ENCODE measurements at regions of chr1 and their contacts with region 1.

Region 1: DNA sequence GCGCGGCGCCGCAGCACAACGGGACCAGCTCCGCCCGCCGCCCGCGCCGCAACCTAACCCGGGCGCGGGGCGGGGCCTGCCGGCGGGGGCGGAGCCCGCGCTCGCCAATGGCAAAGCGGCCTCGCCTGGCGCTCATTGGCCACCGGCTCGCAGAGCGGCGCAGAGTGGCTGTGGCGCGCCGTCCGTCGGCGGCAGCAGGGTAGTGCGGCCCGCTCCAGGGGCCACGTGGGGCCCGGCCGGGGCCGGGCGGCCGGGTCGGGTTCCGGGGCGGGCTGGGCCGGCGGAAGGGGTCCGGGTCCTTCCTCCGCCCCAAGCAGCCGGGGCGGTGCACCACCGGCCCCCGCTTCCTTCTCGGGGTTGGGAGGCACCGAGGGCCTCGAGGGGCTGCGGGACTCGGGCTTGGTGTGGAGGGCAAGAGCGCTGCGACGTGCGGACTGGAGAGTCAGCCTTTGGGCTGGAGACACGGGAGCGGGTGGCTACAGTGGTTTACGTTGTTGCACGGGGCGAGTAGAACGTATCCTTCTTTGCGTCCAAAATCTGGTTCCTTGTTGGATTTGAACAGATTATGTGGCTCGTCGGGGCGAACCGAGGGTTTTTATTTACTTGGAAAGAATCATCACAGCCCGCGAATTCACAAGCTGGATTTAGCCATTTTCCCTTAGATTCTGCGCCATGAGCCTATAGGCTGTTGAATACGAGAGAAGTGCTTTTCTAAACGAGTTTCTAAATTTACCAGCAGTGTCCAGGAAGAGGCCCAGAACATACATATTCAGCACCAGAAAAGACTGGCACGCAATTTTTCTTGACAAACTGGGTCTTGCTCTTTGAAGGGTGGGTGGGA is at the start of gene SRM:
- DNase-seq: peak; percentile 96
- ATAC-seq: peak; percentile 98
- H3K4me3 Mint-ChIP-seq: peak within 1 kb of the TSS; percentile 95
- H3K27ac Mint-ChIP-seq: peak within 1 kb of the TSS; percentile 86
- H3K4me1 Mint-ChIP-seq: peaks cover 18% of the 10 kb centered on the region
- H3K27me3 Mint-ChIP-seq: no peaks in the 10 kb centered on the region
- CTCF ChIP-seq: no peak
- total RNA-seq, gene SRM: 106 and 119 TPM in 2 replicates

Region 2: GRCh38 chr1:11012250-11013171 is 47.7 kb before region 1 on chr1 and contains the start of gene TARDBP:
- CTCF ChIA-PET with region 1: no interaction called
- POLR2A ChIA-PET with region 1: interaction called, 17 read pairs
- intact Hi-C with region 1: loop called (anchors 1 kb)
- DNase-seq: peak; percentile 93
- ATAC-seq: peak; percentile 87
- H3K4me3 Mint-ChIP-seq: peak within 1 kb of the TSS; percentile 89
- H3K27ac Mint-ChIP-seq: peak within 1 kb of the TSS; percentile 99
- H3K4me1 Mint-ChIP-seq: peaks cover 35% of the 10 kb centered on the region
- H3K27me3 Mint-ChIP-seq: no peaks in the 10 kb centered on the region
- CTCF ChIP-seq: no peak
- total RNA-seq, gene TARDBP: 170 and 193 TPM in 2 replicates

Region 3: DNA sequence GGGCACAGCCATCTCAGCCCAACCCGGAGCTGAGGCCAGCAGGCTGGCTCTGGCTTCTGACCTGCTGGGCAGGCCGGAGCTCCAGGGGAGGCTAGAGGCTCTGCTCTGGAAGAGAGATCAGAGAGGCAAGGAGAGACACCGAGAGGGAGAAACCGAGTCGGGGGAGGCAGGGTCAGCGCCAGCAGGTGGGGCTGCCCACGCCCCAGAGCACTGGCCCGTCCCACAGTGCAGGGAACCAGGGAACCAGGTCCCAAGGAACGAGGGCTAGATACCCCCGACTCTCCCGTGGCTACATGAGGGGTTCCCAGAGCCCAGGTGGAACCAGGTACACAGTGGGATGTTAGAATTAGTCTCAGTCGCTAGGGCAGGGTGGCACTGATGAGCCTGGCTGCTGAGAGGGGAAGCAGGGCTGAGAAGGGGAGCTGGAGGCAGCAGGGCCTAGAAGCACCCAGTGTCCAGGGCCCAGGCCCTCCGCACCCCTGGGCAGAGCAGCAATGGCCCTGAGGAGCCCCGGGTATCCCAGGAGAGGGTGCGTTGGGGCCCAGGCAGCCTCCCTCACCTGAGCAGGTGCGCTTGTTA is 15.3 kb before region 1 on chr1:
- CTCF ChIA-PET with region 1: no interaction called
- POLR2A ChIA-PET with region 1: no interaction called
- intact Hi-C with region 1: no loop called
- DNase-seq: peak; percentile 12
- ATAC-seq: no peak
- H3K4me3 Mint-ChIP-seq: no peak overlapping the region
- H3K27ac Mint-ChIP-seq: no peak overlapping the region
- H3K4me1 Mint-ChIP-seq: no peaks in the 10 kb centered on the region
- H3K27me3 Mint-ChIP-seq: no peaks in the 10 kb centered on the region
- CTCF ChIP-seq: no peak

Region 4: DNA sequence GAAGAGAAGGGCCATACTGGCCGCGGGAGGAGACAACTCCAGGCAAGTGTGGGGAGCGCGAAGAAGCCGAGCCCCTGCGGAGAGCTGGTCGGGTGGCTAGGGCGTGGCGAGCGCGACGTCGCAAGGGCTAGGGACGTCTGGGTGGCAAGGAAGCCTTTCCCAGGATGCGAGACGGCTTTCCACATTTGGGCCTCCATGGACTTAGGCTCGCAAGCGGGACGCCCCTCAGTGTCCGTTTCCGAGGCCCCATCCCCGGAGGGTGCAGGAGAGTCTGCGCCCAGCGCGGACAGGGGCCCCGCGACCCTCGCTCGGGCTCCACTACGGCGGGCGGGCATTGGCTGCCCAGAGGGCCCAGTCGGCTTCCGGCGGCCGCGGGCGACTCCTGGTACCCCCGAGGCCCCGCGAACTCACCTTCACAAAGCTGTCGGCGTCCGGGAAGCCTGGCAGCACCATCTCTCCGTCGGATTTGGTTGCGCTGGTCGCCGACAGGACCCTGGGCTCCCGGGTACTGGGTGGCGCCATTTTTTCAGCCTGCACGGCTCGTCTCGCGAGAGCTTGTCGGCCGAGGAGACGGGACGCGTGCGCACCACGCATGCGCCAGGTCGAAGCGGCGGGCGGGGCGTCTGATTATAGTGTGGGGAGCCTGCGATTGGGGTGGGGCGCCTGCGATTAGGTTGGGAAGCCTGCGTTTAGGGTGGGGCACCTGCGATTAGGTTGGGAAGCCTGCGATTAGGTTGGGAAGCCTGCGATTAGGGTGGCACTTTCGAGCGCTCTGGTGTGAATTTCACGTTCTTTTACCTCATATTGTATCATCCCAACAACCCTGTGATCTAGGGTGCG is 39.3 kb after region 1 on chr1 and contains the start of gene EXOSC10:
- CTCF ChIA-PET with region 1: no interaction called
- POLR2A ChIA-PET with region 1: interaction called, 25 read pairs
- intact Hi-C with region 1: loop called (anchors 1 kb)
- DNase-seq: peak; percentile 94
- ATAC-seq: peak; percentile 97
- H3K4me3 Mint-ChIP-seq: peak within 1 kb of the TSS; percentile 95
- H3K27ac Mint-ChIP-seq: peak within 1 kb of the TSS; percentile 93
- H3K4me1 Mint-ChIP-seq: peaks cover 15% of the 10 kb centered on the region
- H3K27me3 Mint-ChIP-seq: no peaks in the 10 kb centered on the region
- CTCF ChIP-seq: no peak
- total RNA-seq, gene EXOSC10: 89.3 and 108 TPM in 2 replicates

Region 5: GRCh38 chr1:11178021-11179015 is 118.1 kb after region 1 on chr1:
- CTCF ChIA-PET with region 1: no interaction called
- POLR2A ChIA-PET with region 1: no interaction called
- intact Hi-C with region 1: no loop called
- DNase-seq: no peak
- ATAC-seq: no peak
- H3K4me3 Mint-ChIP-seq: no peak overlapping the region
- H3K27ac Mint-ChIP-seq: no peak overlapping the region
- H3K4me1 Mint-ChIP-seq: no peaks in the 10 kb centered on the region
- H3K27me3 Mint-ChIP-seq: no peaks in the 10 kb centered on the region
- CTCF ChIP-seq: no peak

Region 6: GRCh38 chr1:11735854-11736745 is 675.9 kb after region 1 on chr1 and contains the start of gene AGTRAP:
- CTCF ChIA-PET with region 1: no interaction called
- POLR2A ChIA-PET with region 1: no interaction called
- intact Hi-C with region 1: loop called (anchors 5 kb)
- DNase-seq: peak; percentile 80
- ATAC-seq: peak; percentile 88
- H3K4me3 Mint-ChIP-seq: peak within 1 kb of the TSS; percentile 93
- H3K27ac Mint-ChIP-seq: peak within 1 kb of the TSS; percentile 79
- H3K4me1 Mint-ChIP-seq: peaks cover 40% of the 10 kb centered on the region
- H3K27me3 Mint-ChIP-seq: no peaks in the 10 kb centered on the region
- CTCF ChIP-seq: no peak
- total RNA-seq, gene AGTRAP: 10.9 and 13.9 TPM in 2 replicates

Region 7: DNA sequence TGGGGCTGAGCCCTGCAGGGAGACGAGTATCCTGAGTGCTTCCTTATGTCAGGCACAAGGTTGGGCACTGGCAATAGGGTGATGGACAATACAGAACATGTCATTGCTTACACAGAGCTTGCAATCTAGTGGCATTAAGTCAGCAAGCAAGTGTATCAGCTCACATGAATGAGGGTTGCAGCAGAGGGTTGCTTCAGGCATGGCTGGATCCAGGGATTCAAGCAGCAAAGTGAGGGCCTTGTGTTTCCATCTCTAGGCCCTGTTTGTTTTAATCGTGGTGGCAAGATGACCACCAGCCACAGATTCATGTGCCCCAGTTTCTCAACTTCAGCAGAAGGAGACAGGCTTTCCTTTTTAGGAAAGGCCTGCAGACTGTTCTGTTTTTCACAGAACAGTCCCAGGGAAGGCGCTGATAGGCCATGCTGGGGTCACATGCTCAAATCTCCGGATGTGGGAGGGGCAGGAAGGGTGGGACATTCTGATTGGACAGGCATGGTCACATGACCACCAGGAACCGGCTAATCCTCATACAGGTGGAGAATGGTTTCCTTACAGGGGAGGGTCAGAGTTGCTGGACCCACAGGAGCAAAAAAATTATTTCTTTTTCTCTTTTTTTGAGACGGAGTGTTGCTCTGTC is 888.7 kb after region 1 on chr1:
- CTCF ChIA-PET with region 1: no interaction called
- POLR2A ChIA-PET with region 1: interaction called, 10 read pairs
- intact Hi-C with region 1: no loop called
- DNase-seq: no peak
- ATAC-seq: no peak
- H3K4me3 Mint-ChIP-seq: no peak overlapping the region
- H3K27ac Mint-ChIP-seq: no peak overlapping the region
- H3K4me1 Mint-ChIP-seq: no peaks in the 10 kb centered on the region
- H3K27me3 Mint-ChIP-seq: no peaks in the 10 kb centered on the region
- CTCF ChIP-seq: no peak

Region 8: GRCh38 chr1:12565094-12565965 is 1505.1 kb after region 1 on chr1:
- CTCF ChIA-PET with region 1: no interaction called
- POLR2A ChIA-PET with region 1: no interaction called
- intact Hi-C with region 1: no loop called
- DNase-seq: no peak
- ATAC-seq: no peak
- H3K4me3 Mint-ChIP-seq: no peak overlapping the region
- H3K27ac Mint-ChIP-seq: no peak overlapping the region
- H3K4me1 Mint-ChIP-seq: no peaks in the 10 kb centered on the region
- H3K27me3 Mint-ChIP-seq: peaks cover 4% of the 10 kb centered on the region
- CTCF ChIP-seq: no peak